Lower leg skin (tissue), 4 donors: ENCODE measurements at regions of chr10 and their contacts with region 1.

Region 1: DNA sequence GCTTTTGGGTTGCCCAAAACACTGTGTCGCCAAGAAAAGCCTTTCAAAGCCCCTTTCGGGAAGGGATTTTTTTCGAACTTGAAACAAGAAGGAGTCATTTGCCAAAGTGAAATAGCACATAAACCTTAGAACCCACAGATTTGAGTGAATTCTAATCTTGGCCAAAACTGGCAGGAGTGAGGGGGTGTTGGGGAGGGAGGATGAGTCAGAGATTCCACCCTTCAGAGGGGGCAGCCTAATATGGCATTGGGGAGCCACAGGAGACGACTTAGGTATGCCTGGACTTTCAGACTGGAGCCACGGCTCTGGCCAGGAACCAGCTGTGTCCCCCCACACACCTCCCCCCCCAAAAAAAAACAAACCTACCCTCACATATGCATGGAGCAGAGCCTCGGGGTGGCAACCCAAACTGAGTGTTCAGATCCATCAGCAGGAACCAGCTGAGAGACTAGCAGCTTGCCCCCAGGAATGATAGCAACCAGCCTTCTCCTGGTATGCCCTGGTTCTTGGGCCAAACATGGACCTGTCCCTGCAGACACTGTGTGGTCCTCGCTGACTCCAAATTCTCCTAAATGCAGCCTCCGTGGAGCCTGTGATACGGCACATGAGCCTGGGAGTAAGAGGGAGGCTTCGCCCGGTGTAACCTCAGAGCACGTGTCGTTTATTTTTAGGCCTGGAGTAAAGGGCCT is 138.3 kb downstream of the FGFR2 start:
- DNase-seq: no peak
- H3K4me3 ChIP-seq: no peak overlapping the region
- CTCF ChIP-seq: no peak
- POLR2A ChIP-seq: no peak

Region 2: GRCh38 chr10:120172356-120172755 is 1287.6 kb before region 1 on chr10:
- intact Hi-C with region 1: loop called (anchors 10 kb)
- DNase-seq: no peak
- H3K4me3 ChIP-seq: no peak overlapping the region
- CTCF ChIP-seq: no peak
- POLR2A ChIP-seq: no peak